Heart right ventricle (tissue), 16 donors: ENCODE measurements at regions of chr2 and their contacts with region 1.

Region 1: DNA sequence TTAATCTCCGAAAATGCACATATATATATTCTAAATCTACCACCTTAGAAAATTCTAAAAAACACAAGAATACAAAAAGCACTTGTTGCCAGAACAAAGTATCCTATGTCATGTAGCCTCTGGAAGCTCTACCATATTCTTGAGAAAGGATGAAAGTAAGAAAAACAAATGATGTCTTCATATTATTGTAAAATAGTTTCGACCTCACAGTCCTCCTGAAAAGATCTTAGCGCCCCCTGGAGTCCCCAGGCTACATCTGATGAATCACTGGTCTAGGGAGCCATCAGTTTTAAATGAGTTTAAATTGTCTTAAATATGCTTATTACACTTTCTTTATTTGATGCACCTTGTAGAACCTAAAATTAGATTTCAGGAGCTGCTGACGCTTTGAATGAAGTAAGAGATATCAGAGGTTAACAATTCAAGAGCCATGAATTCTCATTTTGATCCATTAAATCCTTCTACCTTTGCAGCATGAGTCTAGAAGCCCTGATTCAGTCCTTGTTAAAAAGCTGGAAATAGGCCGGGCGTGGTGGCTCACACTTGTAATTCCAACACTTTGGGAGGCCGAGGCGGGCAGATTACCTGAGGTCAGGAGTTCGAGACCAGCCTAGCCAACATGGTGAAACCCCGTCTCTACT is 138.8 kb downstream of the MCFD2 start:
- DNase-seq: peak in 1 of 2 donors; percentile 41
- ATAC-seq: no peak
- H3K4me3 ChIP-seq: no peak overlapping the region
- H3K27ac ChIP-seq: no peak overlapping the region
- H3K4me1 ChIP-seq: peaks cover 7 to 41% (median 35%) of the 10 kb centered on the region in 9 donors
- H3K27me3 ChIP-seq: no peaks in the 10 kb centered on the region
- CTCF ChIP-seq: peak; percentile 27 to 78 (median 67)

Region 2: DNA sequence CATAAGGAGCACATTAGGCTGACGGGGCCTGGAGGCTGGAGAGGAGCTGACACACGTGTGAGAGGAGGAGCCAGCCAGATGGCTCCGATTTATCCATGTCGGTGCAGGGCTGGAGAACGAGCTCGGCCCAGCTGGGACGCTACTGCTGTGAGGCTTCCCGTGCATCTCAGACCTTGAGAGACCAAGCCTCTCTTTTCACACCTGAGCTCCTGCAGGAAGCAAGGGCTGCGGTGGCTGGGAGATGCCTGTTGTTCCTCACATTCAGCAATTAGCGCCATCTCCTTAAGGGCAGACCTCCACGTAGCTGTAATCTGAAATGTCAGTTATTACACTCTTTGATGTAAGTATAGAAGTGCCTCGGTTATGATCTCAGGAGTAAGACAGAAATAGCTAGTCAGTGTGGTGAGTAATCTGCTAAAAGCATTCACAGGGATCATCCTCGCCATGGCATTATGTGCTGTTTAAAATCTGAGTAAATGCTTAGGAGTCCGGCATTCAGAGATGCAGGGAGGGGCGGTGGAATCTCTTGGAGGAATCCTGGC is 1017.4 kb before region 1 on chr2:
- intact Hi-C with region 1: no loop called
- DNase-seq: no peak
- ATAC-seq: peak; percentile 66 to 92 (median 82)
- H3K4me3 ChIP-seq: peak overlapping the region in 5 of 10 donors; percentile 4 to 35 (median 19)
- H3K27ac ChIP-seq: peak overlapping the region in 6 of 10 donors; percentile 12 to 74 (median 47)
- H3K4me1 ChIP-seq: peaks cover 0 to 27% (median 14%) of the 10 kb centered on the region in 9 donors
- H3K27me3 ChIP-seq: no peaks in the 10 kb centered on the region
- CTCF ChIP-seq: no peak

Region 3: GRCh38 chr2:46650556-46651001 is 126.2 kb before region 1 on chr2:
- intact Hi-C with region 1: loop called in 6 of 10 experiments (anchors 5 to 10 kb)
- DNase-seq: peak in 1 of 2 donors; percentile 79
- ATAC-seq: peak in 7 of 8 donors; percentile 56 to 83 (median 66)
- H3K4me3 ChIP-seq: no peak overlapping the region
- H3K27ac ChIP-seq: no peak overlapping the region
- H3K4me1 ChIP-seq: peaks cover 0 to 12% (median 5%) of the 10 kb centered on the region in 9 donors
- H3K27me3 ChIP-seq: no peaks in the 10 kb centered on the region
- CTCF ChIP-seq: peak; percentile 93 to 100 (median 96)

Region 4: GRCh38 chr2:46657042-46657504 is 119.7 kb before region 1 on chr2:
- intact Hi-C with region 1: loop called in 6 of 10 experiments (anchors 5 to 10 kb)
- DNase-seq: no peak
- ATAC-seq: peak in 7 of 8 donors; percentile 21 to 82 (median 45)
- H3K4me3 ChIP-seq: no peak overlapping the region
- H3K27ac ChIP-seq: peak overlapping the region in 2 of 10 donors; percentile 13 to 68
- H3K4me1 ChIP-seq: peaks cover 0 to 21% (median 10%) of the 10 kb centered on the region in 9 donors
- H3K27me3 ChIP-seq: no peaks in the 10 kb centered on the region
- CTCF ChIP-seq: peak in 5 of 9 donors; percentile 20 to 51 (median 42)

Region 5: GRCh38 chr2:46666044-46666679 is 110.6 kb before region 1 on chr2:
- intact Hi-C with region 1: loop called in 2 of 10 experiments (anchors 10 kb)
- DNase-seq: peak; percentile 77 to 85
- ATAC-seq: peak; percentile 56 to 87 (median 72)
- H3K4me3 ChIP-seq: no peak overlapping the region
- H3K27ac ChIP-seq: peak overlapping the region in 4 of 10 donors; percentile 38 to 73 (median 59)
- H3K4me1 ChIP-seq: peaks cover 0 to 55% (median 34%) of the 10 kb centered on the region in 9 donors
- H3K27me3 ChIP-seq: no peaks in the 10 kb centered on the region
- CTCF ChIP-seq: no peak

Region 6: GRCh38 chr2:46706264-46706983 is 70.4 kb before region 1 on chr2:
- intact Hi-C with region 1: loop called in 2 of 10 experiments (anchors 5 kb)
- DNase-seq: no peak
- ATAC-seq: peak in 1 of 8 donors; percentile 29
- H3K4me3 ChIP-seq: no peak overlapping the region
- H3K27ac ChIP-seq: peak overlapping the region in 2 of 10 donors; percentile 15 to 48
- H3K4me1 ChIP-seq: peaks cover 2 to 84% (median 71%) of the 10 kb centered on the region in 9 donors
- H3K27me3 ChIP-seq: no peaks in the 10 kb centered on the region
- CTCF ChIP-seq: no peak

Region 7: GRCh38 chr2:46854261-46854660 is 77.5 kb after region 1 on chr2:
- intact Hi-C with region 1: loop called in 1 of 10 experiments (anchors 2 kb)
- DNase-seq: peak in 1 of 2 donors; percentile 45
- ATAC-seq: peak; percentile 21 to 66 (median 38)
- H3K4me3 ChIP-seq: no peak overlapping the region
- H3K27ac ChIP-seq: peak overlapping the region; percentile 71 to 96 (median 86)
- H3K4me1 ChIP-seq: peaks cover 21 to 63% (median 46%) of the 10 kb centered on the region in 9 donors
- H3K27me3 ChIP-seq: no peaks in the 10 kb centered on the region
- CTCF ChIP-seq: no peak